Dendritic cell treated with granulocyte-macrophage colony-stimulating factor and Interleukin-4, amounts not matched to agents 40 ng/mL and 50 ng/mL, for 4 days (primary cell): ENCODE measurements at regions of chr5 and their contacts with region 1.

Region 1: DNA sequence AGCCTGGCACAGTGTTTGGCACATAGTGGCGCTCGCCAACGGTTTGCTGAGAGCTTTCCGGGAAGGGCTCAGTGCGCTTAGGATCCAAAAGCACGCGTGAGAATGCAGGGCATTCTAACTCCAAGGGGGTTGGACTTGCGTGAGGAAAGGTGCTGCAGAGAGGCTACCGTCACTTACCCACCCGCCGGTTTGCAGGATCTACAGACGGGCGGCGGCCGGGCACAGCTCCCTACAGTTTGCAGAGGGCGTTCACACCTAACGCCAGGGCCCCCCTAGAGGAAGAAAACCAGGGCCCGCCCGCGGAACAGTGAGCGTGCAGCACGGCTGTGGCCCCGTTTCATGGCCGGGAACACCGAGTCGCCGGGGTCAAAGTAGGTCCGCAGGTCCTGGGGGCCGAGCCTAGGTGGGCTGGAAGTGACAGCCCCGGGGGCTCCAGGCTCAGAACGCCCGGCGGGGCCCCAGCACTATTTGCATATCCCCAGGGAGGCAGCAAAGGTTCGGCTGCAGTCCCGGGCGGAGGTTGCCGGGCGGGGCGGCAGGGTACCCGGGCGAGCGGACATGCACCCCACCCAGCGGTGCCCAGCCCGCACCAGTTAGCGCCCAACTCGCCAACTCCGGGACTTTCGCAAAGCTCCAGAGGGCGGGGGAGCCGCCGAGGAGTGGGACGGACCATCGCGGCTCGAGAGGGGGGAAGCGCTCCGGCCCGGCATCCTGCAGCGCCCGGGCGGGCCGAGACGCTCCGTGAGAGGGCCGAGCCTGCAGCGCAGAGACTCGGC is 526 bp upstream of the GALNT10 start:
- H3K4me3 Mint-ChIP-seq: peak overlapping the region; percentile 79
- H3K27ac Mint-ChIP-seq: peak overlapping the region; percentile 60
- H3K4me1 Mint-ChIP-seq: peaks cover 37% of the 10 kb centered on the region
- H3K27me3 Mint-ChIP-seq: peaks cover 28% of the 10 kb centered on the region

Region 2: GRCh38 chr5:154072414-154073171 is 117.4 kb before region 1 on chr5:
- intact Hi-C with region 1: no loop called
- H3K4me3 Mint-ChIP-seq: no peak overlapping the region
- H3K27ac Mint-ChIP-seq: no peak overlapping the region
- H3K4me1 Mint-ChIP-seq: peaks cover 6% of the 10 kb centered on the region
- H3K27me3 Mint-ChIP-seq: peaks cover 6% of the 10 kb centered on the region

Region 3: DNA sequence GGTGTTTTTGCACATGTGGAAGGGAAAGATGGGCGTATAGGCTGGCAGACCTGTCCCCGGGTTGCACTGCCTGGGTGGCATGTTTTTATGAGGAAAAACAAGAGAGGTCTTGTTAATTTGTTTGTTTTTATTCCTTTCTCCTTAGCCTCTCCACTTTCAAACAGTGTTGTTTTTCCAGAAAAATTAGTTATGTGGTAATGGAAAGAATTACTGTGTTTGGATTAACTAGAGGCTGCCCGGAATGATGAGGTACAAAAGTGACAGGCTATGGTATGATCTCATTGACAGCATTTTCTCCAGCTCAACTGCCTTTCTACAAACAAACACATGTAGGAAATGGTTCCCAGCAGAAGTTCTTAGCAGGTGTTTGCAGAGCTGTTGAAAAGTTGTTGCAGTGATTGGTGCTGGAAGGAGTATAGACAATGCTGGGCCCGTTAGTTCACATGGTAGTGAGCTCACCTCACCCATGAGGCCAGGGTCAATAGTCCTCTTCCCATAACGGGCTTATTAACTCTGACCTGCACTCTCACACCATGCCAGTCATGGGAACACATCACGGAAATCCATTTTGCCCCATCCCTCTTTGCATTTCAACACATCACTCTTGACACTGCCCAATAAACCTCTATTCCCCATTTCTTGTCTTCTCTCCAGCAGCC is 144.5 kb after region 1 on chr5:
- intact Hi-C with region 1: no loop called
- H3K4me3 Mint-ChIP-seq: no peak overlapping the region
- H3K27ac Mint-ChIP-seq: no peak overlapping the region
- H3K4me1 Mint-ChIP-seq: no peaks in the 10 kb centered on the region
- H3K27me3 Mint-ChIP-seq: no peaks in the 10 kb centered on the region

Region 4: DNA sequence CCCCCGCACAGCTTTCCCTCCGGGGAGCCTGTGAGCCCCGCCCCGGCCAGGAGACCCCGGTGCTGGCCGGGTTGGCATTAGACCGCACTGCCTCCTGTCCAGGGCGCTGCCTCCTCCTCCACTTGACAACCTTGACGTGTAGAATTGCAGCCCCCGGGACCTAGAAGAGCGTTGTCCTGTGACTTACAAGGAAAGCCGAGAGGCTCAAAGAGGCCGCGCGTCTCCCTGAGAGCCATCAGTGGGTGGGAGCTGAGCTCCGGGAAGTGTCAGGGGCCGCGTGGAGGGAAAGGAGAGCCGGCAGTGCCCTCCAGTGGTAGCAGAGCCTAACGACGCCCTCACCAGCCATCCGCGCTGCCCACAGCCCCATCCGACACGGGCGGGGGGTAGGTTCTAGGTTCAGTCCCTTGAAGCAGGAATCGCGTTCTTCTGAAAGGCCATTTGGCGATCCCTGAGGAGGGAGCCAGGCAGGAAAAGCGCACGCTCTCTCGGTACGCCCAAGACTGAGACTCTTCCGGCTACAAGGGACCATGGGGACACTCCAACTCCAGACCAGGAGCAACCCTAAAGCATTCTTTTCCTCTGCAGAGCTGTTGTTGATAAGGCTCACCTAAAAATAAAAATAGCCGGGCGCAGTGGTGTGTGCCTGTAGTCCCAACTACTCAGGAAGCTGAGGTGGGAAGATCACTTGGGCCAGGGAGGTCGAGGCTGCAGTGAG is 215.2 kb after region 1 on chr5:
- intact Hi-C with region 1: loop called (anchors 10 kb)
- H3K4me3 Mint-ChIP-seq: peak overlapping the region; percentile 64
- H3K27ac Mint-ChIP-seq: no peak overlapping the region
- H3K4me1 Mint-ChIP-seq: peaks cover 8% of the 10 kb centered on the region
- H3K27me3 Mint-ChIP-seq: peaks cover 5% of the 10 kb centered on the region

Region 5: DNA sequence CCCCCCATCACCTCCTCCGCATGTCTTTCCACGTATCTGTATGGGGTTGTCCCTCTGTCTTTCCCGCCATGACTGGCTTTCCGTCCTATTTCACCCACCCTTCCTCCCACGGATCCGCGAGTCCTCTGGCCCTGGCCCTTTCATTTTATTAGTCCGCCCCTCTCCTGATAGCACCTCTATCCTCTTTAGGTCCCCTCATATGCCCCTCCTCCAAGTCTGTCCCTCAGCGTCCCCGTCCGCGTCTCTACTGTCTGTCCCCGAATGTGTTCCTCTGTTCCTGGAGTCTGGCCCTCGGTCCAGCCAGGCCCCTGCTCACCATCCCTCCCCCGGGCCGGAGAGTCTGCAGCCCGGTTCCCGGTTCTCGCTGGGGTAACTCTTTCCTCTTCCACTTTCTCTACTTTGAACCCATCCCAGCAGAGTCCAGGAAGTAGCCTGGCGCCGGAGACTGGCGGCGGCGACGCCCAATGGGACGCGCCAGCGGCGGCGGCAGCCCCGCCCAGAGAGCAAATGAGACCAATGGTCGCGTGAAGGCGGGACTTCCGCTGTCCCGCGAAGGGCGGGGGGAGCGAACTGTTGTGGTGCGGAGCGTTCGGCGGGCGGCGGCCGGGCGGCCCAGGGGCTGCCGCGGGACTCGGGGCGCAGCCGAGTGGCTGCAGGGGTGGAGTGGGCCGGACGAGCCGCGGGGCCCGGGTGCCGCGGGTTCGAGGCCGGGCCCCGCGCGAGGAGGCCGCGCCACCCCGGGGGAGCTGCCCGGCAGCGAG is 255.6 kb after region 1 on chr5 and contains the start of gene SAP30L:
- intact Hi-C with region 1: loop called (anchors 2 kb)
- H3K4me3 Mint-ChIP-seq: peak within 1 kb of the TSS; percentile 95
- H3K27ac Mint-ChIP-seq: peak within 1 kb of the TSS; percentile 90
- H3K4me1 Mint-ChIP-seq: peaks cover 36% of the 10 kb centered on the region
- H3K27me3 Mint-ChIP-seq: no peaks in the 10 kb centered on the region

Region 6: DNA sequence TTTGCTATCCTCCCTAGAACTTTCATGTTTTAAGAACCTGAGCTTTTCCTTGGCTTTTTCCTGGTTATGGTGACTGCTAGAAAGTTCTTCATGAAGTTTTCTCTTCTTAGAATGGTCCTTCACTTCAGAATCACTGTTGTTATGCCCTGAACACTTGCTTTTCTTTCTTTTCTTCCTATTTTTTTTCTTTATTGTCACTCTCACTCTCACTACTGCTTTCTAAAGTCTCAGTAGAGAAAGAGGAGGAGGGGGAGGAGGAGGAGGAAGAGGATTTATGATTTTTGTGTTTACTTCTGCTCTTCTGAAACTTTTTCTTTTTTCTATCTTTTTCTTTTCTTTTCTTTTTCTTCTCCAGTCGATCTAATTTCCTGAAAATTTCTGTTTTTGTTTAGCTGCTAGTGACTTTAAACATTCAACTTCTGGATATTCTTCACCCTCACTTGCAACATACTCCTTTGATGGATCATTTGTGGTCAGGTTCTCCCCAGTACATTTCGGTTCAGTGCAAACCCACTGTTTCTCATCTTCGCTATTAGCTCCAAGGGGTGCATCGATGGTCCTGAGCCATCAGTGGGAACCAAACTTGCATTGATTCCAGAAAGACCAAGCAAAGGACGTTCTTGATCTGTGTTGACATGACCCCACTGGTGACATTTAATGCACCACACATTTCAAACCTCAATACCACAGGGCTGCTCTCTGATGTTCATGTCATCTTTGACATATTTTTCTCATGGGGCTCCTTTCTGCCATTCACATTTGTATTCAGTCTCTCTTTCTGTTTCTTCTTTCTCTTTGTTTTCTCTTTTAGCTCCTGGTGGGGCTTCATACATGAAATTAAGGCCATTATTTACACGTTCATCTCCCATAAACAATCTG is 369.6 kb after region 1 on chr5:
- intact Hi-C with region 1: no loop called
- H3K4me3 Mint-ChIP-seq: no peak overlapping the region
- H3K27ac Mint-ChIP-seq: no peak overlapping the region
- H3K4me1 Mint-ChIP-seq: peaks cover 10% of the 10 kb centered on the region
- H3K27me3 Mint-ChIP-seq: peaks cover 4% of the 10 kb centered on the region